WTC11 (cell line): ENCODE measurements at regions of chrX and their contacts with region 1.

Region 1: DNA sequence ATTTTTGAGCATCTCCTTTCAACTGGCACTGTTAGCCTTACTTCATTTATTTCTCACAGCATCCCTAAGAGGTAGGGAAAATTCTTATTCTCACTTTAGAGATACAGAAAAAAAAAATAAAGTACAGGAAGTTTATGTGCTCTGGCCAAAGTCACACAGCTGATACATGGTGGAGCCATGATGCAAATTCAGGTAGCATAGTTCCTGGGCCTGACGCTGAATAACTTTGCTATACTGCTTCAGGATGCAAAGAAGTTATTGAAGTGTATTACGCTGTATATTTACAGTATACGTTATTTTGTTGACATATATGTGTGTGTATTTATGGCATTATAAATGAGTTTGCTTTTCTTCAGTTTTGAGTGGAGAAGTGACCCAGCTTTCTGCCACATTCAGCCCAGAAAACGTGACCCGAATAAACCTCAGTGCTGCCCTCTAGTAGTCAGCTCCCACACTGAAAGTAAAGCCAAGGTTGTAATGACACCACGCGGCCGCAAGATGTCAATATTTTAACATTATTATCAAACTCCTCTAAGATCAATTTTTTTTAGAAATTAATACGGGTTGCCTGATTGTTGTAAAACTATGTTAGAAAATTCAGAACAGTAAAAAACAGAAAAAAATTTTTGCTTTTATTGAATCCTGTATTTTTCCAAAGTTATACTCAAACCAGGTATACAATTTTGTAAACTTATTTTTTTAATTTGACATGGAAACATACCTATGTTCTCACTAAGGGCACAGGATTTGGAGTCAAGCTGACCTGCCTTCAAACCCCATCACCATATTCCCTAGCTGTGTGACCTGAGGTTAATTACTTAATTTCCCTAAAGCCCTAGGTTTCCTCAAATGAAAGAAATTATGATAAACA is 3.8 kb upstream of the GUCY2F start:
- DNase-seq: peak; percentile 33
- ATAC-seq: no peak
- H3K4me3 Mint-ChIP-seq: no peak overlapping the region
- H3K27ac Mint-ChIP-seq: no peak overlapping the region
- H3K4me1 Mint-ChIP-seq: no peaks in the 10 kb centered on the region
- H3K27me3 Mint-ChIP-seq: no peaks in the 10 kb centered on the region
- CTCF ChIP-seq: peak; percentile 72

Region 2: DNA sequence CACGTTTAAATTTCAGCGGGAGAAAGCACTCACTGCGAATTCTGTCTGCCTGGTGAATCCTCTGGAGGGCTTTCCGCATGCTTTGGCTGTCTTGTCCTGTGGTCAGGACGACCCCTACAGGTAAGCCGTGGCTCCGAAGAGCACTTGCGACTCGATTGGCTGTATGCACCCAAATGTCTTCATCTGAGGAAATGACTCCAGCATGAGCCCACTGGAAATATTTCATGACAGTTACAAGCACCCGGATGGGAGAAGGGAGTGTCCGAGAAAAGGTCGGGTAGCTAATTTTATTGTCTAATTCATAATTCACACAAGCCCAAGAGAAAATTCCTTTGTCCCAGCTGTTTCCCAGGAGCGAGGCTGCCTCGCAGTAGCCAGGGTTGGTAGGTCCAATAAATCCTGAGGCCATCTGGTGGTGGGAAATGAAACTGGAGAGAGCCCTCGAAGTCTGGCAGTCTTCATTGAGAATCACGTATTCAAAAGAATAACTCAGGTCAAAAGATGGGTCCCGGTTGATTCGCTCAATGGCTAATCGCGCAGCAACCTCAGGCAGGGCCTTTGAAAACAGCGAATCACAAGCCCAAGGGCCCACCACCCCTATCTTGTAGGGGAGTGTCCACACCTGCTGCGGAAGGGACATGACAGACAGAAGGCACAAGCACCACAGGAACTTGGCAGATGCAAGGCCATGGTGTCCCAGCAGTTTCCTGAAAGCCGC is 10.4 kb before region 1 on chrX:
- CTCF ChIA-PET with region 1: interaction called, 33 read pairs
- POLR2A ChIA-PET with region 1: no interaction called
- DNase-seq: peak; percentile 57
- ATAC-seq: peak; percentile 75
- H3K4me3 Mint-ChIP-seq: no peak overlapping the region
- H3K27ac Mint-ChIP-seq: no peak overlapping the region
- H3K4me1 Mint-ChIP-seq: peaks cover 19% of the 10 kb centered on the region
- H3K27me3 Mint-ChIP-seq: no peaks in the 10 kb centered on the region
- CTCF ChIP-seq: no peak

Region 3: DNA sequence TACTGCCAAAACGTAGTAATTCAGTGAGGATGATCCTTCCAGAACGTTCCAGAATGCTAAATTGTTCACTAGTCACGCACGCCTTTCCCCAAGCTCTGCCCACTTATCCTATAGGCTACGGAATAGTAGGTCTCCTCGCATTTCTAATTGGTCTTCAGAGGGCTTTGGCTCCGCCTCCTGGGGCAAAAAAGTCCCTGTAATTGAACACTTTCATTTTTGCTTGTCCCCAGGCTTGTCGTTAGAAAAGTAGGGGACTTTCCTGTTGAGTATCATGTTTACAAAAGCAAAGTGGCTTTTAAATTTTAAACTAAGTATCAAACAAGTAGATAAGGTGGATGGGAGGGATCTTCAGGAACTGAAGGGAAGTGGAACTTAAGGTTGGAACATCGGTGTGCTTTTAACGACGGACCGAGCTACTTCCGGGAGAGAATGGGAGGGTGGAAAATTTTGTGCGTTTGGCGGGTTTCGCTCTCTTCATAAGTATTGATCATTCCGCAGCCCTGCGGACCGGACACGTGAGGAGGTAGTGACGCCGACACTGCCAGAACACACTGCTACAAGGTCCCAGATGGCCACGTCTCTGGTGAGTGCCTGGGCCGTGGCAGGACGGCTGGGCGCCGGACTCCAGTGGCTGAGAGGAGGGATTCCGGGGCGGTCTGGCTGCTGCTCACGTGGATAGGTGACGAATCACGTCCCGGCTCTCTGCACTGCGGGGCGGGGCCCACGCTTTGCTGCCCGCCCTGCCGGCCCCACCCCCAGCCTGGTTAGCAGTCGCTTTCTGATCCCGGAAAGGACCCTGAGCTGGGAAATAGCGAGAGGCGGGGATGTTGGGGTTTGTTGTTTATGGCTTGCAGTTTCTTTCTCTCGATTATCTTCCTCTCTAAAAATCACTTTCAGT is 51.0 kb after region 1 on chrX and contains the start of gene NXT2:
- CTCF ChIA-PET with region 1: interaction called, 12 read pairs
- POLR2A ChIA-PET with region 1: no interaction called
- DNase-seq: peak; percentile 83
- ATAC-seq: peak; percentile 99
- H3K4me3 Mint-ChIP-seq: peak within 1 kb of the TSS; percentile 97
- H3K27ac Mint-ChIP-seq: peak within 1 kb of the TSS; percentile 100
- H3K4me1 Mint-ChIP-seq: peaks cover 4% of the 10 kb centered on the region; the same call in 1 of the 2 replicates
- H3K27me3 Mint-ChIP-seq: peaks cover 31% of the 10 kb centered on the region
- CTCF ChIP-seq: no peak
- total RNA-seq, gene NXT2: 9.9 to 10.4 TPM (median 10.4 TPM) in 3 replicates

Region 4: GRCh38 chrX:109600237-109600651 is 114.5 kb after region 1 on chrX:
- CTCF ChIA-PET with region 1: interaction called, 10 read pairs
- POLR2A ChIA-PET with region 1: no interaction called
- DNase-seq: peak; percentile 15
- ATAC-seq: peak; percentile 82
- H3K4me3 Mint-ChIP-seq: peak overlapping the region; percentile 52
- H3K27ac Mint-ChIP-seq: no peak overlapping the region
- H3K4me1 Mint-ChIP-seq: peaks cover 23% of the 10 kb centered on the region
- H3K27me3 Mint-ChIP-seq: peaks cover 7% of the 10 kb centered on the region
- CTCF ChIP-seq: no peak

Region 5: DNA sequence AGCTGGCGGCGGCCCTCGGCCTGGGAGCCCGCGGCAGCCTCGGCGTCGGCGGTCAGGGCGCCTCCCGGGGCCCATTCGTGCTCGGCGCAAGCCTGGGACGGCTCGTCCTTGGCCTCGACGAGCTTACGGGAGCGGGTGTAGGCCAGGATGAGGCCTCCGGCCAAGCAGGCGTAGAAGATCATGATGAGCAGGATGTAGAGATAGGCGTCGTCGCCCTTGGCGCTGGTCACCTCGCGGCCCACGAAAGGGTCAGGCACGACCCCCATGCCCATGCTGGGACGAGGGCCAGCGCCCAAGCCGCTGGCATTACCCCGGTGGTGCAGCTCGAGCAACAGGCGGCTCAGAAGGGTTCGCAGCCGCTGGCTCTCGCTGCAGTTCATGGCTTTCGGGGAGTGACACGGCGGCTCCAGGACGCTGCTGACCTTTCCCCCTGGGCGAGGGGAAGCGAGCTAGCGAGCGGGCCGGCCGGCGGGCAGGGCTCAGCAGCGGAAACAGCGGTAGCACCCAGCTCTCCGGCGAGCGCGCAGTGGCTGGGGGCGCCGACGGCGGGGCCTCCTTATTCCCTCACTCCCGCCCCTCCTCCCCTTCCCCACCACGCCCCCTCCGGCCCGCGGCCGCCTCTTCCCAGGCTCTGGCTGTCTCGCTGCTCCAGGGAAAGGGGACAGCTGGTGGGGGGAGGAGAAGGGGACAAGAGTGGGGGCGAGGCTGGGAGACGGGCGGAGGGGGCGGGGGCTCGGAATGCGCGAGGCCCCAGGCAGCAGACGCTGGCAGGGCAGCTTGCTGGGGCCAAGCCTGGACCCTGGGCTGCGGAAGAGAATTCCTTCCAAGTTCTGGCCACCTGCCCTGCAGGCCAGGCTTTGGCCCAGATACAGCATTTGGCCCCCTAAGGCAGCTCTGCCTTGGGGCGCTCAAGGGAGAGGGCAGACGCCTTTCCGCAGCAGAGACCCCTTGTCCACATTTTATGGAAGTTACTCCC is 139.2 kb after region 1 on chrX and contains the start of gene KCNE5:
- CTCF ChIA-PET with region 1: interaction called, 29 read pairs
- POLR2A ChIA-PET with region 1: no interaction called
- DNase-seq: peak; percentile 70
- ATAC-seq: peak; percentile 87
- H3K4me3 Mint-ChIP-seq: peak within 1 kb of the TSS; percentile 49
- H3K27ac Mint-ChIP-seq: no peak within 1 kb of the TSS
- H3K4me1 Mint-ChIP-seq: peaks cover 7% of the 10 kb centered on the region
- H3K27me3 Mint-ChIP-seq: peaks cover 18% of the 10 kb centered on the region
- CTCF ChIP-seq: no peak
- total RNA-seq, gene KCNE5: 2.2 to 3.4 TPM (median 2.7 TPM) in 3 replicates

Region 6: GRCh38 chrX:109635176-109635575 is 149.5 kb after region 1 on chrX:
- CTCF ChIA-PET with region 1: interaction called, 79 read pairs
- POLR2A ChIA-PET with region 1: no interaction called
- DNase-seq: peak; percentile 9
- ATAC-seq: peak; percentile 70
- H3K4me3 Mint-ChIP-seq: no peak overlapping the region
- H3K27ac Mint-ChIP-seq: no peak overlapping the region
- H3K4me1 Mint-ChIP-seq: no peaks in the 10 kb centered on the region; the same call in 1 of the 2 replicates
- H3K27me3 Mint-ChIP-seq: no peaks in the 10 kb centered on the region
- CTCF ChIP-seq: no peak

Region 7: GRCh38 chrX:109890895-109891502 is 405.3 kb after region 1 on chrX:
- CTCF ChIA-PET with region 1: interaction called, 28 read pairs
- POLR2A ChIA-PET with region 1: no interaction called
- DNase-seq: peak; percentile 70
- ATAC-seq: peak; percentile 96
- H3K4me3 Mint-ChIP-seq: no peak overlapping the region
- H3K27ac Mint-ChIP-seq: no peak overlapping the region
- H3K4me1 Mint-ChIP-seq: no peaks in the 10 kb centered on the region
- H3K27me3 Mint-ChIP-seq: peaks cover 2% of the 10 kb centered on the region; the same call in 1 of the 2 replicates
- CTCF ChIP-seq: peak; percentile 58